ENCODE measurements at regions of chrX and their contacts with region 1.

Region 1: DNA sequence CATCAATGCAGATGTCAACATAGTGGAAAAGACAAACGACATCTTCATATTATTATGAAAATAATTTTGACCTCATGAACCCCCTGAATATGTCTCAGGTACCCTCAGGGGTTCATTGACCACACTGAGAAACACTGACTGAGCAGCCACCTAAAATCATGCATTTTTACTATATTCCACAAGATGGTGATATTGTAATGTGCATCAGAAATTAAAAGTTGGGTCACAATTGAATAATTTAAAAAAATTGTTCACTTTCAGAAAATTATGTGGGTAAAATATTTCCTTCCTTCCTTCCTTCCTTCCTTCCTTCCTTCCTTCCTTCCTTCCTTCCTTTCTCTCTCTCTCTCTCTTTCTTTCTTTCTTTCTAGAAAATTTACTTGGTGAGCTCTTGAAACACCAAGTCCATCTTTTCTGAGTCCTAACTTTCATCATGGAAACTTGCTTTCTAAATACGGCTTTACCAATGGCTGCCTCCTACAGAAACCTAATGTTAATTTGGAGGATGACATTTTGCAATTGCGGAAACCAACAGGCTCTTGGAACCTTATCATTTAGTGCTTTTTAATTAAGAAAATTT is 103.6 kb downstream of the RTL3 start:
- DNase-seq: no peak
- H3K4me3 ChIP-seq: no peak overlapping the region
- H3K27ac ChIP-seq: no peak overlapping the region
- H3K4me1 ChIP-seq: no peaks in the 10 kb centered on the region
- H3K27me3 ChIP-seq: no peaks in the 10 kb centered on the region
- CTCF ChIP-seq: peak; percentile 28 to 49 (median 37)
- EP300 ChIP-seq: no peak
- POLR2A ChIP-seq: no peak

Region 2: DNA sequence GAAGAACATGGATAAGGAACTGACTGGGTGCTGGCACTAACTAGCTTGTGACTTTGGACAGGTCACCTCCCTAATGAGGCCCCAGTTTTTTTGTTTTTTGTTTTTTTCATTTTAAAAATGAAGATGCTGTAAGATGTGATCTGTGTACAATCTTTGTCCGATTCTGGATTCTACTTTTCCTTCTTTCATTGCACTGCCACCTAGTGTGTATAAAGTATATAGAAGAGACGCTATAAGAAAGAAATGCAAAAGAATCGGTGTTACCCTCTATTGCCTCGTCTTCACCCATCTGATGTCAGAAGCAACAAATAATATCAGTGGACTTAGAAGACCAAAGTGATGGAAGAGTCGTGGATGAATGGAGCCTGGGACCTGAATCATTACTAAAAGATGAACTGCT is 331.1 kb after region 1 on chrX:
- in situ Hi-C with region 1: loop called in 3 of 4 experiments (anchors 25 kb)
- intact Hi-C with region 1: no loop called
- DNase-seq: no peak
- H3K4me3 ChIP-seq: no peak overlapping the region
- H3K27ac ChIP-seq: no peak overlapping the region
- H3K4me1 ChIP-seq: no peaks in the 10 kb centered on the region
- H3K27me3 ChIP-seq: no peaks in the 10 kb centered on the region
- CTCF ChIP-seq: peak; percentile 14 to 43 (median 28)
- EP300 ChIP-seq: no peak
- POLR2A ChIP-seq: no peak

Region 3: DNA sequence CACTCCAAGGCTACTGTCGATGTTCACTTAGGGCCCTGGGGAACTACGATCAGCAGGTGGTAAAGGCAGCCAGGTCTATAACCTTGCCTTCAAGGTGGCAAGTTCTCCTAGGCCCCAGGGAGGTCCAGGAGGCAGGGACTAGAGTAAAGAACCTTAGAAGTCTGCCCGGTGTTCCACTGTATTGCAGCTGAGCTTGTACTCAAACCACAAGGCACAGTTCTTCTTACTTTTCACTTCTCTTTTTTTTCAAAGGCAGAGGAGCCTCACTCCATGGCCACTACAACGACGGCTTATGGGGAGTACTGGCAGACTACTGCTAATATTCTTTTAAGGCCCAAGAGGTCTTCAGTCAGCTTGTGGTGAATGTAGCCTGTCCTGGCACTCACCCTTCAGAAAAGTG is 510.2 kb after region 1 on chrX:
- in situ Hi-C with region 1: loop called in 1 of 4 experiments (anchors 25 kb)
- intact Hi-C with region 1: no loop called
- DNase-seq: peak; percentile 8
- H3K4me3 ChIP-seq: no peak overlapping the region
- H3K27ac ChIP-seq: no peak overlapping the region
- H3K4me1 ChIP-seq: no peaks in the 10 kb centered on the region
- H3K27me3 ChIP-seq: no peaks in the 10 kb centered on the region
- CTCF ChIP-seq: no peak
- EP300 ChIP-seq: no peak
- POLR2A ChIP-seq: no peak

Region 4: GRCh38 chrX:79081895-79082512 is 526.5 kb after region 1 on chrX:
- in situ Hi-C with region 1: loop called in 1 of 4 experiments (anchors 25 kb)
- intact Hi-C with region 1: no loop called
- DNase-seq: no peak
- H3K4me3 ChIP-seq: no peak overlapping the region
- H3K27ac ChIP-seq: no peak overlapping the region
- H3K4me1 ChIP-seq: no peaks in the 10 kb centered on the region
- H3K27me3 ChIP-seq: no peaks in the 10 kb centered on the region
- CTCF ChIP-seq: peak; percentile 45 to 64 (median 51)
- EP300 ChIP-seq: no peak
- POLR2A ChIP-seq: no peak

Region 5: DNA sequence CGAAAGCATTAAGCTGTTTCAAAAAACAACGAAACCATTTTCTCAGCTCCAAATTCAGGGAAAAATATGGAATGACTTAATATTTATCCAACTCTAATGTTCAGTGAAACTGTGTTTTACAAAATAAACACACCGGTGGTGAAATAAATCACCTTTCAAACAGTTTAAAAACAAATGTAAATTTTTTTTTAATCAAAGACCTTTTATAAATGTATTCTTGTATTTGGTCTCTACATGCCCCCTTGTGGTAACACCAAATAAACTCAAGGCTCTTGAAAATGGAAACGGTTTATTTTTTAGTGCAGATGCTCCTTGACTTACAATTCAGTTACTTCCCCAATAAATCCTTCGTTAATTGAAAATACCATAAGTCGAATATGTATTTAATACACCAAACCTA is 857.5 kb after region 1 on chrX:
- in situ Hi-C with region 1: loop called in 1 of 4 experiments (anchors 25 kb)
- intact Hi-C with region 1: no loop called
- DNase-seq: no peak
- H3K4me3 ChIP-seq: no peak overlapping the region
- H3K27ac ChIP-seq: no peak overlapping the region
- H3K4me1 ChIP-seq: no peaks in the 10 kb centered on the region
- H3K27me3 ChIP-seq: no peaks in the 10 kb centered on the region
- CTCF ChIP-seq: peak in 4 of 5 experiments; percentile 19 to 33 (median 22)
- EP300 ChIP-seq: no peak
- POLR2A ChIP-seq: no peak

Region 6: DNA sequence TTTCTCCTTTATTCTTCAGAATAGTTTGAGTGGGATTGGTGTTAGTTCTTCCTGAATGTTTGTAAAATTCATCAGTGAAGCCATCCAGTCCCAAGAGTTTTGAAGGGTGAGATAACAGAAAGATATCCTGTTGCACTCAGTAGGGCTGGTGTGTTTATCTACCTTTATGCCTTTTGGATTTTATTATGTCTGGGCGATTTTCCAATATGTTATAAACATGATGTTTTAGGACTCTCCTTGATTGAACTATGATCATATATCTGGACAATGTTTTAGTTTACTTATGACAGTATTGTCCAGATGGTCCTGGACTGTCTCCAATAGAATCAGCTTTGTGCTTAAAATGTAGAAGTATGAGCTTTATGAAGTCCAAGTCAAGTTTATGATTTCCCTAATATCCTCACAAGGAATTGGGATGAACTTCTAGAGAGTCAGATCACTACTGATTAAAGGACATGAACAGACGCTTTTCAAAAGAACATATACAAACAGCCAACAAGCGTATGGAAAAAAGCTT is 889.3 kb after region 1 on chrX:
- in situ Hi-C with region 1: loop called in 2 of 4 experiments (anchors 25 kb)
- intact Hi-C with region 1: no loop called
- DNase-seq: no peak
- H3K4me3 ChIP-seq: no peak overlapping the region
- H3K27ac ChIP-seq: no peak overlapping the region
- H3K4me1 ChIP-seq: no peaks in the 10 kb centered on the region
- H3K27me3 ChIP-seq: no peaks in the 10 kb centered on the region
- CTCF ChIP-seq: no peak
- EP300 ChIP-seq: no peak
- POLR2A ChIP-seq: no peak